K562 (cell line): ENCODE measurements at regions of chr10 and their contacts with region 1.

Region 1: GRCh38 chr10:133309111-133309719 is 501 bp downstream of the ZNF511 start:
- DNase-seq: peak; percentile 85 to 94 (median 90)
- ATAC-seq: peak; percentile 85
- H3K4me3 ChIP-seq: peak overlapping the region; percentile 67
- H3K27ac ChIP-seq: peak overlapping the region; percentile 85
- H3K4me1 ChIP-seq: peaks cover 21 to 39% of the 10 kb centered on the region in 2 experiments
- H3K27me3 ChIP-seq: no peaks in the 10 kb centered on the region
- CTCF ChIP-seq: no peak
- EP300 ChIP-seq: no peak
- POLR2A ChIP-seq: no peak
- RAD21 ChIP-seq: no peak

Region 2: GRCh38 chr10:133139551-133140065 is 169.6 kb before region 1 on chr10:
- CTCF ChIA-PET with region 1: interaction called, 3 read pairs
- POLR2A ChIA-PET with region 1: no interaction called
- in situ Hi-C with region 1: loop called (anchors 5 kb)
- intact Hi-C with region 1: loop called (anchors 1 kb)
- DNase-seq: no peak
- ATAC-seq: no peak
- H3K4me3 ChIP-seq: no peak overlapping the region
- H3K27ac ChIP-seq: no peak overlapping the region
- H3K4me1 ChIP-seq: peaks cover 10 to 26% of the 10 kb centered on the region in 2 experiments; a peak in 4 of 5 replicates
- H3K27me3 ChIP-seq: peaks cover 0 to 16% of the 10 kb centered on the region in 2 experiments; a peak in 2 of 5 replicates
- CTCF ChIP-seq: no peak
- EP300 ChIP-seq: no peak
- POLR2A ChIP-seq: no peak
- RAD21 ChIP-seq: no peak

Region 3: DNA sequence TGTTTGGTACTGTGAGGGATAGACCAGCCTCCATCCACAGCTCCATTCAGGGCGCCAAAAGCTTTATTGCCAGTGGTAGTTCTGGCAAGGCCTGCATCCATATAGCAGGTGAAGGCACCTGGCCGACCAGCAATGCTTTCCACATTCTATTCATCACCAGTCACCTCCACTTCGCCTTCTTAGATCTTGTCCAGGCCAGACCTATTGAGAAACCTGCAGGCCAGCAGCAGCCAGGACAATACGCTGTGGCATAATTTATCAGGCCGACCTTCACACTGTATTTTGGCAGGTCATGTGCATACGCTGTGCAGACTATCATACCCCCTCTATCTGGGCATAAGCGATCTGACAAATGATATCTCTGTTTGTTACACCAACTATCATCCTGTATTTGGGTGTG is 164.4 kb before region 1 on chr10:
- CTCF ChIA-PET with region 1: interaction called, 3 read pairs
- POLR2A ChIA-PET with region 1: no interaction called
- in situ Hi-C with region 1: loop called (anchors 5 kb)
- intact Hi-C with region 1: loop called (anchors 1 kb)
- DNase-seq: no peak
- ATAC-seq: no peak
- H3K4me3 ChIP-seq: no peak overlapping the region
- H3K27ac ChIP-seq: no peak overlapping the region
- H3K4me1 ChIP-seq: peaks cover 10 to 26% of the 10 kb centered on the region in 2 experiments; a peak in 4 of 5 replicates
- H3K27me3 ChIP-seq: peaks cover 0 to 16% of the 10 kb centered on the region in 2 experiments; a peak in 2 of 5 replicates
- CTCF ChIP-seq: no peak
- EP300 ChIP-seq: no peak
- POLR2A ChIP-seq: no peak
- RAD21 ChIP-seq: no peak

Region 4: GRCh38 chr10:133245439-133246235 is 63.6 kb before region 1 on chr10:
- CTCF ChIA-PET with region 1: no interaction called
- POLR2A ChIA-PET with region 1: no interaction called
- in situ Hi-C with region 1: loop called (anchors 5 kb)
- intact Hi-C with region 1: loop called (anchors 2 kb)
- DNase-seq: peak; percentile 86 to 95 (median 90)
- ATAC-seq: peak; percentile 88
- H3K4me3 ChIP-seq: peak overlapping the region; percentile 17; the same call in 1 of the 2 replicates
- H3K27ac ChIP-seq: peak overlapping the region; percentile 79
- H3K4me1 ChIP-seq: peaks cover 36 to 96% of the 10 kb centered on the region in 2 experiments
- H3K27me3 ChIP-seq: no peaks in the 10 kb centered on the region; a peak in 1 of 5 replicates
- CTCF ChIP-seq: no peak
- EP300 ChIP-seq: peak; percentile 81; the same call in 1 of the 2 replicates
- POLR2A ChIP-seq: peak; percentile 54; the same call in 1 of the 2 replicates
- RAD21 ChIP-seq: no peak

Region 5: GRCh38 chr10:133278577-133279265 is 30.5 kb before region 1 on chr10:
- CTCF ChIA-PET with region 1: no interaction called
- POLR2A ChIA-PET with region 1: interaction called, 4 read pairs
- in situ Hi-C with region 1: no loop called
- intact Hi-C with region 1: loop called (anchors 2 kb)
- DNase-seq: peak; percentile 80 to 86 (median 83)
- ATAC-seq: peak; percentile 86
- H3K4me3 ChIP-seq: no peak overlapping the region
- H3K27ac ChIP-seq: peak overlapping the region; percentile 92
- H3K4me1 ChIP-seq: peaks cover 40 to 71% of the 10 kb centered on the region in 2 experiments
- H3K27me3 ChIP-seq: no peaks in the 10 kb centered on the region
- CTCF ChIP-seq: peak in 1 of 3 experiments; percentile 14; a peak in 1 of 6 replicates
- EP300 ChIP-seq: peak; percentile 77
- POLR2A ChIP-seq: peak; percentile 49; the same call in 1 of the 2 replicates
- RAD21 ChIP-seq: 0 out of 4 replicates have a peak, but pooled peaks of 1 of the 2 experiments have one; percentile 8

Region 6: GRCh38 chr10:133400624-133401424 is 91.6 kb after region 1 on chr10:
- CTCF ChIA-PET with region 1: no interaction called
- POLR2A ChIA-PET with region 1: no interaction called
- in situ Hi-C with region 1: no loop called
- intact Hi-C with region 1: no loop called
- DNase-seq: no peak
- ATAC-seq: peak; percentile 28; the same call in 2 of the 3 replicates
- H3K4me3 ChIP-seq: no peak overlapping the region
- H3K27ac ChIP-seq: no peak overlapping the region
- H3K4me1 ChIP-seq: peaks cover under 1 to 11% of the 10 kb centered on the region in 2 experiments; a peak in 3 of 5 replicates
- H3K27me3 ChIP-seq: no peaks in the 10 kb centered on the region
- CTCF ChIP-seq: no peak
- EP300 ChIP-seq: no peak
- POLR2A ChIP-seq: no peak
- RAD21 ChIP-seq: no peak